ENCODE measurements at regions of chr19 and their contacts with region 1.

Region 1: DNA sequence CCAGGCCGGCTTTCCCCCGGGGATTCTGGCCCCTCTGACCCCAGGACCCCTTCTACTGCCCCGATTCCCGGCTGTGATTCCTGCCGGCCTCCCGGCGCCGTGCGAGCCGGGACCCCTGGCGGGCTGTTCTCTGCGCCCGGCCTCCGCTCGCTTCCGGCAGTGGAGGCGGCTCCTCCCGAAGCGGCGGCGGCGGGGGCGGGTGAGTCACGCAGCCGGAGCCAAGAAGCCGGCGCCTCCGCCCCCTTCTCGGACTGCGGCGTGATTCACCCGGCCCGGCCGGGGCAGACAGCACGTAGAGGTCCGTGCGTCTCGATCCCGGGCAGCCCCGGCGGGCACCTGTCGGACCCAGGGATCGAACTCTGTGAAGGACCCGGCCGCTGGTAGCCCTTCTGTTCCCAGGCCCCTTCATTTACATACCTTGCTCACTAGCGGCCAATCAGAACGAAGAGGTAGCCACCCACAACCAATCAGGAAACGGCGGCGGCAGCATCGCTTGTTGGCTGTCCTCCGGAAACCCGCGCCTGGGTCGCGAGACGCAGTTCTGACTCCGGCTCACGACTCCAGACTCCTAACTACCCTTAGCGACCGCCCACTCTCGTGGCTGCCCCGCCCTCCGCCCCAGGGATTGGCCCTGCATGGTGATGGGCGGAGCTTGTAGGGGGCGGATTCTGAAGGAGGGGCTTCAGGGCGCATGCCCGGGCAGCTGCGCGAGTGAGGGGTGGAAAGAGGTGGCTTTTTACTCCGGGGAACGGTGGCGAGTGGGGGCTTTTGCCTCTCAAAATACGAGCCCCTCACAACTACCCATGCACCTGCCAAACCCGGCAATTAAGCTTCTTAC is at the start of gene SERTAD1:
- H3K4me3 ChIP-seq: peak within 1 kb of the TSS; percentile 67
- H3K27ac ChIP-seq: peak within 1 kb of the TSS; percentile 97
- H3K4me1 ChIP-seq: peaks cover 19% of the 10 kb centered on the region
- CTCF ChIP-seq: peak; percentile 98

Region 2: GRCh38 chr19:40178756-40179155 is 246.9 kb before region 1 on chr19:
- CTCF ChIA-PET with region 1: no interaction called
- POLR2A ChIA-PET with region 1: no interaction called
- H3K4me3 ChIP-seq: no peak overlapping the region
- H3K27ac ChIP-seq: no peak overlapping the region
- H3K4me1 ChIP-seq: no peaks in the 10 kb centered on the region
- CTCF ChIP-seq: no peak

Region 3: DNA sequence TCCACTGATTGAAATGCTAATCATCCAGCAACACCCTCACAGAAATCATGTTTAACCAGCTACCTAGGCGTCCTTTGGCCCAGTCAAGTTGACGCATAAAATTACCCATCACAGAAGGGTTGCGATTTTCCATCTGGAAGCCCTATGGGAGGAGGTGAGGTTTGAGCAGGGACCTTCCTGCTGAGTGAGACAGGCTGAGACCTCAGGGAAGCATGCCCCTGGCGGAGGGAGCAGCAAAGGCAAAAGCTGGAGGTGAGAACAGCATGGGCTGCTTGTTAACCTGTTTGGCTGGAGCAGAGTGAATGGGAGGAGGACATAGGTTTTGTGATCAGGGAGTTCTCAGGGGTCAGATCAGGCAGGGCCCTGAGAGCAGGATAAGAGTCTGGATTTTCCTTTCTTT is 214.7 kb before region 1 on chr19:
- CTCF ChIA-PET with region 1: no interaction called
- POLR2A ChIA-PET with region 1: no interaction called
- H3K4me3 ChIP-seq: no peak overlapping the region
- H3K27ac ChIP-seq: no peak overlapping the region
- H3K4me1 ChIP-seq: peaks cover 6% of the 10 kb centered on the region; the same call in 1 of the 2 replicates
- CTCF ChIP-seq: no peak

Region 4: DNA sequence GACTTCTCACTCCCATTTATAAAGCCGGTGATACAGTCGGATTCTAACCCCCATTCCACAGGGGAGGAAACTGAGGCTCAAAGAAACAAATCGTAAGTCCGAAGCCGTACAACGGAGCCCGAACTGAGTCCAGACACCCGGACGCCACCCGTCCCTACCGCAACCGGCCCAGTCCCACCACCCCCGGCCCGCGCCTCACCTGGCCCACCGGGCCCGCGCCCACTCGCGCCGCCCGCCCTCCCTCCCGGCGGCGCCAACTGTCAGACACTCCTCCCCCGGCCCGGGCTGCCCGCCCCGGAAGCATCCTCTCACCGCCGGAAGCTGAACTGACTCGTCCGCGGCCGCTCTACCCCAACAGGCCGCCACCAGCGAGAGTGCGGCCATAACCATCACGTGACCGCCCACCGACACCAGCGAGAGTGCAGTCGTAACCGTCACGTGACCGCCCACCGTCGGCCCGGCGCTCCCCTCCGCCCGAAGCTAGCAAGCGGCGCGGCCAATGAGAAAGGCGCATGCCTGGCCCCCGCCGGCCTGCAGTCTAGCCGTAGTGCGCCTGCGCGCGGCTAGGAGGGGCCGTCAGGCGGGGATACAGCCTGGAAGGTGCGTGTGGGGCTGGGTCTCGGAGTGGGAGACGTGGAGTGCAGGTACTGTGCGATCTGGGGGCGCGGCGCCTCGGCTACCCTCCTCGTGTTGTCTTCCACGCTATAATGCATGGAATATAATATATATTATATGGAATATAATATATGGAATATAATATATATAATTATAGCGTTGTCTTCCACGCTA is 77.3 kb before region 1 on chr19 and contains the starts of genes C19orf47 and PLD3:
- CTCF ChIA-PET with region 1: interaction called, 12 read pairs
- POLR2A ChIA-PET with region 1: interaction called, 37 read pairs
- H3K4me3 ChIP-seq: peak within 1 kb of the TSS; percentile 71
- H3K27ac ChIP-seq: peak within 1 kb of the TSS; percentile 73
- H3K4me1 ChIP-seq: peaks cover 8% of the 10 kb centered on the region
- CTCF ChIP-seq: peak; percentile 22; the same call in 1 of the 2 replicates

Region 5: DNA sequence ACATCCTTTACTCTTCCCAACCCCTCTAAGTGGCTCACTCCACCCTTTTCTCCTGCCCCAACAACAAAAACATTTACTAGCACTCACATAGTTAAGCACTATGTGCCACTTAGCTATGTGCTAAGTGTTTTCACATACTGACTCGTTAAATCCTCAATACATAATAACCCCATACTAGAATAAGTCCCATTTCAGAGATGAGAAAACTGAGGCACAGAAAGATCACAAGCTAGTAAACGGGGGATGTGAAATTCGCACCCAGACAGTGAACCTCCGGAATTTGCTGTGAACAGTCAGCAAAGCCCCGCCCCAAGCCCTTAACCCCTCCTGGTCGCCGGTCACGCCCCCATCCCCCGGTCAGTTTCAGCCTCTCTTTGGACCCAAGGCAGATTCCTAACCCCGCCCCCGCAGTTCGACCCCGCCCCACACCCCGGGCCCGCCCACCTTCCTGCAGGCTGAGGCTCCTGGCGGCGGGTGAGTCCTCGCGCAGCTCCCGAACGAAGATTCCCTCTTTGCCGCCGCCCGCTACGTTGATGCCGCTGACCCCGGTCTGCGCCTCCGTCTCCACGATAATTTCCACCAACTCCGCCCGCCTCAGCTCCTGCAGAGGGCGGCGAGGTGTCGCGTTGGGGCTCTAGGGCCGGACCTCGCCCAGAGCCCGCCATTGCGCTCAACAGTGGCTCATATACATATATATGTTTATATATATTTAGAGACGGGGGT is 22.2 kb before region 1 on chr19:
- CTCF ChIA-PET with region 1: interaction called, 40 read pairs
- POLR2A ChIA-PET with region 1: interaction called, 30 read pairs
- H3K4me3 ChIP-seq: peak overlapping the region; percentile 50
- H3K27ac ChIP-seq: peak overlapping the region; percentile 80
- H3K4me1 ChIP-seq: peaks cover 9% of the 10 kb centered on the region
- CTCF ChIP-seq: peak; percentile 68; the same call in 1 of the 2 replicates

Region 6: GRCh38 chr19:40444192-40445028 is 18.7 kb after region 1 on chr19 and contains the start of gene SERTAD3:
- CTCF ChIA-PET with region 1: interaction called, 27 read pairs
- POLR2A ChIA-PET with region 1: interaction called, 428 read pairs
- H3K4me3 ChIP-seq: peak within 1 kb of the TSS; percentile 67
- H3K27ac ChIP-seq: peak within 1 kb of the TSS; percentile 99
- H3K4me1 ChIP-seq: peaks cover 14% of the 10 kb centered on the region
- CTCF ChIP-seq: peak; percentile 97

Region 7: GRCh38 chr19:40465557-40466150 is 40.0 kb after region 1 on chr19 and contains the start of gene BLVRB:
- CTCF ChIA-PET with region 1: interaction called, 24 read pairs
- POLR2A ChIA-PET with region 1: interaction called, 74 read pairs
- H3K4me3 ChIP-seq: peak within 1 kb of the TSS; percentile 53
- H3K27ac ChIP-seq: peak within 1 kb of the TSS; percentile 20; the same call in 1 of the 2 replicates
- H3K4me1 ChIP-seq: peaks cover 13% of the 10 kb centered on the region
- CTCF ChIP-seq: no peak

Region 8: GRCh38 chr19:40523322-40524047 is 97.8 kb after region 1 on chr19:
- CTCF ChIA-PET with region 1: interaction called, 17 read pairs
- POLR2A ChIA-PET with region 1: interaction called, 6 read pairs
- H3K4me3 ChIP-seq: no peak overlapping the region; the same call in 1 of the 2 replicates
- H3K27ac ChIP-seq: peak overlapping the region; percentile 47; the same call in 1 of the 2 replicates
- H3K4me1 ChIP-seq: peaks cover 9% of the 10 kb centered on the region
- CTCF ChIP-seq: peak; percentile 99

Region 9: DNA sequence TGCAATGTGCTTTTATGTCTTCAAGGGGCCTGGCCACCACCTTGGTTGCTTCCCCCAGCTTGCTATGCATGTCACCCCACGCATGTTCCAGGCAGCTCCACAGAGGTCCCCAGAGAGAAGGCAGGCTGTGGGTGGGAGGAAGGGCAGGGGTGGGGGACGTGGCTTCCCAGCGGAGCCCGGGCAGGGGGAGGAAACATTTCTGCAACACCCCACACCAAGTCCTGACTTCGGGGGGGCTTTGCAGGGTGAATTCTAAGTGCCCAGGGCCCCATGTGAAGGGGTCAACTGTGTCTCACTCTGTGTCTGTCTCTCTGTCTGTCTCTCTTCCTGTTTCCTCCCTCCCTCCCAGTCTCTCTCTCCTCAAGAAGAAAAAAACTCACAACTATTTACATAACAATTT is 215.1 kb after region 1 on chr19:
- CTCF ChIA-PET with region 1: interaction called, 14 read pairs
- POLR2A ChIA-PET with region 1: interaction called, 4 read pairs
- H3K4me3 ChIP-seq: no peak overlapping the region
- H3K27ac ChIP-seq: no peak overlapping the region
- H3K4me1 ChIP-seq: peaks cover 10% of the 10 kb centered on the region
- CTCF ChIP-seq: no peak

Region 10: GRCh38 chr19:40762754-40763470 is 337.2 kb after region 1 on chr19:
- CTCF ChIA-PET with region 1: no interaction called
- POLR2A ChIA-PET with region 1: no interaction called
- H3K4me3 ChIP-seq: no peak overlapping the region
- H3K27ac ChIP-seq: peak overlapping the region; percentile 34; the same call in 1 of the 2 replicates
- H3K4me1 ChIP-seq: no peaks in the 10 kb centered on the region
- CTCF ChIP-seq: no peak